Activated CD4-positive, alpha-beta memory T cell treated with anti-CD3 and anti-CD28 coated beads for 36 hours (primary cell): ENCODE measurements at regions of chr6 and their contacts with region 1.

Region 1: DNA sequence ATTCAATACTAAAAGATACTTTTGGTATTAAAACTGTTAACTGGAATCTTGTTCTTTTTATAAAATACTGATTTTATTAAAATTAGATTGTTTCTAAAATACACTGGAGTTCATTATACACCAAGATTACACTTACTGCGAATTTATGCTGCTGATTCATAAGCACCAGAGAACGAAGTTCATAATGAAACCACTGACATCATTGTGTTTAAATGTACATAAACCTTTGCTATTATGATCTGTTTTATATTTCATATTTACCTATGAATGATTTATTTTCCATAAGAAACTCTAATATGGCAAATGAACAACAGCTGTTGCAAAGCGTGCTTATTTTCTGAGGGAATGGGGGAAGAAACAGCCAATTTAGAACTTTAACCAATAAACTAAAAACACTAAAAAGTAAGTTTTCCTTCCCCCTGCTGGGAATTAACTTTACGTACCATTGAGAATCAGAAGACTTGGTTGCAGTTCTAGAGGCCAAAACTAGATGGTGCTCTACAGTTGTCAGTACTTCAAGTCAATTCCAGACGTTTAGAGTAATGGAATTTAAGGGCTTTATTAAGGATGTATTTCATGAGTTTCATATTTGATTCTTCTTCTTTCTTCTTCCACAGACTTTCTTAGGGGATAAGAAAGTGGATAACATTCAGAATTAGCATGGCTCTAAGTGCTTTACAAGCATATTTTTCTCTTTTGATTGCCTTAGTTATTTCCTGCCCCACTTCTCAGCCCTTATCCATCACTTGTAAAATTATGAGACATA is 30.8 kb upstream of the COL19A1 start:
- DNase-seq: no peak
- H3K4me3 Mint-ChIP-seq: no peak overlapping the region
- H3K27ac Mint-ChIP-seq: no peak overlapping the region
- H3K4me1 Mint-ChIP-seq: peaks cover 4% of the 10 kb centered on the region
- H3K27me3 Mint-ChIP-seq: peaks cover 15% of the 10 kb centered on the region

Region 2: GRCh38 chr6:69796642-69797390 is 38.8 kb before region 1 on chr6 and contains the start of gene LMBRD1:
- CTCF ChIA-PET with region 1: interaction called, 4 read pairs
- POLR2A ChIA-PET with region 1: no interaction called
- intact Hi-C with region 1: loop called (anchors 1 kb)
- DNase-seq: peak; percentile 99
- H3K4me3 Mint-ChIP-seq: peak within 1 kb of the TSS; percentile 87
- H3K27ac Mint-ChIP-seq: peak within 1 kb of the TSS; percentile 89
- H3K4me1 Mint-ChIP-seq: peaks cover 46% of the 10 kb centered on the region
- H3K27me3 Mint-ChIP-seq: no peaks in the 10 kb centered on the region
- total RNA-seq, gene LMBRD1: 17.4 to 18.2 TPM

Region 3: DNA sequence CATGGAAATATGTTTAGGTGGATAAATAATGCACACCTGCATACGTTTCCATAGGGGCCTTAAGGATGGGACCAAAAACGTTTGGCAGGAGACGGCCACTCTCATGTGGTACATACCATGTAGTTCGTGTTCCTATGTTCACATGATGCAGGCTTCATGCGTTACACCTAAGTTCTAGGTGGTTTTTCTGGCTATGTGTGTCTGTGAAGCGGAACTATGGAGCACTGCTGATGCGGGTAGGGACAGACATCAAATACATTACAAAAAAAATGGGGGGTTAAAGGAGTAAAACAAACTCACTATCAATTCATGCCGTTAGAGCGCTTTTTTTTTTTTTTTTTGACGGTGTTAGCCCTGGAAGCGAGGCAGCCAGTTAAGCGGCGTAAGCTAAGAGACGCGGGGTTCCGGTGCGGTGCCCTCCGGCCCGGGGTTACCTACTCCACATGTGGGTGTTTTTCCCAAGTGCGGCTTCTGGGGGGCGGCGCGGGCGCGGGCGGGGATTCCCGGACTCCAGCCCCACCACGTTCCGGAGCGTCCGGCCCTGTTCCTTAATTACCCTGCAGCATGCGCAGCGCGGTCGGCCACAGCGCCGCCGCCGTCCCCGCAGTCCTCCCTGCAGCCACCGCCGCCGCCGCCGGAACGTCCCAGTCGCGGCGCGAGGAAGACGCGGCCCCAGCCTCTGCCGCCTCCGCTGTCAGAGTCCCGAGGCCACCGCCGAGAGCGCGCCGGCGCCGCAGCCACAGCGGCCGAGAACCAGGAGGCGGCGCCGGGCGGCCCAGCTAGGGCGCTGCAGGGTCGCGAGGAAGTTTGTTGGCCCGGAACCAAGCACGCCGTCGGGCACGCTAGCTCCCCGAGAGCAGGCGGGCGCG is 31.4 kb after region 1 on chr6:
- CTCF ChIA-PET with region 1: interaction called, 4 read pairs
- POLR2A ChIA-PET with region 1: no interaction called
- intact Hi-C with region 1: loop called (anchors 1 kb)
- DNase-seq: peak; percentile 69
- H3K4me3 Mint-ChIP-seq: peak overlapping the region; percentile 73
- H3K27ac Mint-ChIP-seq: no peak overlapping the region
- H3K4me1 Mint-ChIP-seq: peaks cover 27% of the 10 kb centered on the region
- H3K27me3 Mint-ChIP-seq: peaks cover 16% of the 10 kb centered on the region

Region 4: GRCh38 chr6:70107852-70108629 is 272.4 kb after region 1 on chr6:
- CTCF ChIA-PET with region 1: interaction called, 12 read pairs
- POLR2A ChIA-PET with region 1: no interaction called
- intact Hi-C with region 1: loop called (anchors 1 kb)
- DNase-seq: no peak
- H3K4me3 Mint-ChIP-seq: no peak overlapping the region
- H3K27ac Mint-ChIP-seq: no peak overlapping the region
- H3K4me1 Mint-ChIP-seq: no peaks in the 10 kb centered on the region
- H3K27me3 Mint-ChIP-seq: peaks cover 9% of the 10 kb centered on the region